ENCODE measurements at regions of chr3 and their contacts with region 1.

Region 1: DNA sequence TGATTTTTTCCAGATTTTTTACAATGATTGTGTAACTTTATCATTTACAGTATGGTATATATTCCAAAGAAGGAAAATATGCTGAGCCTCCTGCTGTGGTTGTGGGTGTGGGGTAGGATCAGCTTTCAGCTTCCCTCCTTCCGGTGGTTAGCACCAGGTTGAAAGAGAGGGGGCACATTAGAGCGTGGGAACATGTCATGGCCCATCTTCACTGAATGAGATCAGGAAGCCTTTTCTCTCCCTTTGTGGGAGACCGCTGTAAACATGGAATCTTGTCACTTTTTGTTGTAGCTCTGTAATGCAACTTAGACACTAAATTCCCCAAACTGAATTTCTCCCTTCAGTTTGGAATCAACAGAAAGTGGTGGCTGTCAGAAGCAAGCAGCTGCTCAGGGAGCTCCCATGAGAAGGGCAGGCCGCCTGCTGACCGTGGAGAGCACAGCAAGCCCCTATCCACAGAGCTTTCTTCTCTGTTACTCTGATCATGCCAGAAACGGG is 86.7 kb upstream of the LIMD1 start:
- DNase-seq: no peak
- H3K4me3 Mint-ChIP-seq: no peak overlapping the region
- H3K27ac Mint-ChIP-seq: no peak overlapping the region
- H3K4me1 Mint-ChIP-seq: peaks cover 14% of the 10 kb centered on the region
- H3K27me3 Mint-ChIP-seq: no peaks in the 10 kb centered on the region

Region 2: GRCh38 chr3:43785551-43785950 is 1722.3 kb before region 1 on chr3:
- CTCF ChIA-PET with region 1: no interaction called
- intact Hi-C with region 1: no loop called
- DNase-seq: no peak
- H3K4me3 Mint-ChIP-seq: no peak overlapping the region
- H3K27ac Mint-ChIP-seq: no peak overlapping the region
- H3K4me1 Mint-ChIP-seq: no peaks in the 10 kb centered on the region
- H3K27me3 Mint-ChIP-seq: no peaks in the 10 kb centered on the region

Region 3: GRCh38 chr3:45043728-45044299 is 464.1 kb before region 1 on chr3:
- CTCF ChIA-PET with region 1: interaction called, 11 read pairs
- intact Hi-C with region 1: loop called (anchors 2 kb)
- DNase-seq: no peak
- H3K4me3 Mint-ChIP-seq: no peak overlapping the region
- H3K27ac Mint-ChIP-seq: no peak overlapping the region
- H3K4me1 Mint-ChIP-seq: peaks cover 20% of the 10 kb centered on the region
- H3K27me3 Mint-ChIP-seq: peaks cover 6% of the 10 kb centered on the region

Region 4: GRCh38 chr3:45546716-45547701 is 39.1 kb after region 1 on chr3:
- CTCF ChIA-PET with region 1: interaction called, 9 read pairs
- intact Hi-C with region 1: loop called (anchors 2 kb)
- DNase-seq: peak; percentile 57
- H3K4me3 Mint-ChIP-seq: no peak overlapping the region
- H3K27ac Mint-ChIP-seq: no peak overlapping the region
- H3K4me1 Mint-ChIP-seq: no peaks in the 10 kb centered on the region
- H3K27me3 Mint-ChIP-seq: no peaks in the 10 kb centered on the region

Region 5: GRCh38 chr3:45593708-45594609 is 86.1 kb after region 1 on chr3:
- CTCF ChIA-PET with region 1: interaction called, 4 read pairs
- intact Hi-C with region 1: loop called (anchors 2 kb)
- DNase-seq: peak; percentile 61
- H3K4me3 Mint-ChIP-seq: peak overlapping the region; percentile 80
- H3K27ac Mint-ChIP-seq: peak overlapping the region; percentile 84
- H3K4me1 Mint-ChIP-seq: peaks cover 48% of the 10 kb centered on the region
- H3K27me3 Mint-ChIP-seq: no peaks in the 10 kb centered on the region

Region 6: DNA sequence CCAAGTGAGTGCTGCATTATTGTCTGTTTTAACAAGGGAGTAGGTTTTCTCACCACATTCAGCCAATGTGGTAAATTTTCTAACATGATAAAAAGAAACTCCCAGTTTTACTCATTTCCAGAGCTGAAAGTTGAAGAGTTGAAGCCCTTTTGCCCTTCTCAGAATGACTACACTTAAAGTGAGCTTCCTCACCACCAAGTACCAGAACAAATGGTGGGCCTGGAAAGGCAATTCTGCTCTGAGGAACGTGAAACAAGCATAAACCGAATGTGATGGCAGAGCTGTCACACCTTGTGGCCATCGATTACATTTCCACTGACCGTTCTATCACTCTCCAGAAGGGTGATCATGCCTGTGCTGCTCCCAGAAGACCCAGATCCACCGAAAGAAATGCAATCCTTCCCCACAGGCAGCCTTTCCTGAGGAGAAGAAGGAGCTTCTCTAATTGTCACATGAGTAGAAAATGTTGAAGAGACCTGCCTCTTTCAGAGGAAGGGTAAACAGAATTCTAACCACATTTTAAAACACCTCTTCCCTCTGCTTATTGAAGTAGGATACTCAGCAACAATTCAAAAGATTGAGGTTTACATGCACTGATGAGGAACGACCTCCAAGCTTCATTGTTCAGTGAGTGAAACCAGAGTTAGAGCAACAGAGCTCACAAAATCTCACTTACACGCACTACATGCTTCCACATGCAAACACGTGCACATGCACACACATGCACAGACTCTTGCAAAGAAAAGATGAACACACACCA is 357.1 kb after region 1 on chr3:
- CTCF ChIA-PET with region 1: no interaction called
- intact Hi-C with region 1: loop called (anchors 1 kb)
- DNase-seq: peak; percentile 48
- H3K4me3 Mint-ChIP-seq: no peak overlapping the region
- H3K27ac Mint-ChIP-seq: no peak overlapping the region
- H3K4me1 Mint-ChIP-seq: peaks cover 44% of the 10 kb centered on the region
- H3K27me3 Mint-ChIP-seq: peaks cover 53% of the 10 kb centered on the region

Region 7: DNA sequence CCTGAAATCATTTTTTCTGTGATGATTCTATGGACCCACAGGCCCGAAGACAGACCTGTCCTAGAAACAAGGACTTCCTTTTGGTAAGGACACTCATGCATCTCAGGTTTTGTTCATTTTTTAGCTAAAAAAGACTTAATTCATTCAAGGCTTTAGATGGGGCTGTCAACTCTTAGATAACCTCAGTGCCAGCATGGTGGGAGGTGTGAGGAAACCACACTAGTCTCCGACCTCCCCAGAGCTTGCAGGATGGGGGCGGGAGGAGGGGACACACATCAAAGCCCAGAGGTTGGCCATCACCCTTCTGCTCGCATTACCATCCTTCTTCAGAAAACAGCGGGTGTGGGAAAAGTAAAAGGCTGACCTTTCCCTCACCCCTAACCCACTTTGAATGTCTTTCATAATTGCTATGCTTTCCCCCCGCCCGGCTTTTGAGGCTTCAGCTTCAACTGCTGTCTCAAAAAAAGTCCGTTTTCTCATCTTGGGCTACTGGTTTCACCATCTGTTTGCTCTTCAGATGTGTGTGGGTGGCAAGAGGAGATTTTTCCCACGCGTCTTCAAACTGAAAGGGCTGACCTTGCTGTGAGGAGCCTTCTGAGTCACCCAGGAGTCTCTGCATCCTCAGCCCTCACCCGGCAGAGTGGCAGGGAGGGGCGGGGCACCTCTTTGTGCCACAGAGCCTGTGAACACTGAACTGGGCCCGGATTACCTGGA is 407.8 kb after region 1 on chr3:
- CTCF ChIA-PET with region 1: no interaction called
- intact Hi-C with region 1: loop called (anchors 5 kb)
- DNase-seq: peak; percentile 83
- H3K4me3 Mint-ChIP-seq: no peak overlapping the region
- H3K27ac Mint-ChIP-seq: no peak overlapping the region
- H3K4me1 Mint-ChIP-seq: peaks cover 24% of the 10 kb centered on the region
- H3K27me3 Mint-ChIP-seq: peaks cover 7% of the 10 kb centered on the region